Heart left ventricle (tissue), 16 donors: ENCODE measurements at regions of chr18 and their contacts with region 1.

Region 1: DNA sequence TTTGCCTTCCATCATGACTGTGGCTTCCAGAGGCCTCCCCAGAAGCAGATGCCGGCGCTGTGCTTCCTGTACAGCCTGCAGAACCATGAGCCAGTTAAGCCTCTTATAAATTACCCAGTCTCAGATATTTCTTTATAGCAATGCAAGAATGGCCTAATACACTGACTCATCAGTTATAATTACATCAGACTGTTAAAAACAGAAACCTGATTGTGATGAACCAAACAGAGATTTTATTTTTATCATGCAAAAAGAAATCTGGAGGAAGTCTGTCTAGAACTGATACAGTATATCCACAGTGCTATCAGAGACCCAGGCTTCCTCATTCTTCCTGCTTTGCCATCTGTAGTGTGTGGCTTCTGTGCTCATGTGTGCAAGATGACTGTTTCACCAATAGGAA is 93.4 kb upstream of the MEX3C start:
- DNase-seq: no peak
- ATAC-seq: no peak
- H3K4me3 ChIP-seq: no peak overlapping the region
- H3K27ac ChIP-seq: no peak overlapping the region
- H3K4me1 ChIP-seq: peaks cover 0 to 9% (median 0%) of the 10 kb centered on the region in 12 donors
- H3K27me3 ChIP-seq: no peaks in the 10 kb centered on the region
- CTCF ChIP-seq: no peak
- POLR2A ChIP-seq: no peak

Region 2: GRCh38 chr18:51110073-51110803 is 180.6 kb before region 1 on chr18:
- intact Hi-C with region 1: no loop called
- DNase-seq: peak; percentile 52 to 85 (median 64)
- ATAC-seq: peak; percentile 82 to 96 (median 94)
- H3K4me3 ChIP-seq: peak overlapping the region in 2 of 12 donors; percentile 20 to 24
- H3K27ac ChIP-seq: no peak overlapping the region
- H3K4me1 ChIP-seq: peaks cover 0 to 6% (median 0%) of the 10 kb centered on the region in 12 donors
- H3K27me3 ChIP-seq: peaks cover 0 to 4% (median 0%) of the 10 kb centered on the region in 9 donors
- CTCF ChIP-seq: peak; percentile 85 to 99 (median 96)
- POLR2A ChIP-seq: no peak

Region 3: GRCh38 chr18:51248685-51249084 is 42.2 kb before region 1 on chr18:
- intact Hi-C with region 1: loop called in 1 of 10 experiments (anchors 5 kb)
- DNase-seq: no peak
- ATAC-seq: no peak
- H3K4me3 ChIP-seq: no peak overlapping the region
- H3K27ac ChIP-seq: no peak overlapping the region
- H3K4me1 ChIP-seq: no peaks in the 10 kb centered on the region
- H3K27me3 ChIP-seq: peaks cover 0 to 6% (median 0%) of the 10 kb centered on the region in 9 donors
- CTCF ChIP-seq: no peak
- POLR2A ChIP-seq: no peak

Region 4: GRCh38 chr18:51668101-51668500 is 377.2 kb after region 1 on chr18:
- intact Hi-C with region 1: no loop called
- DNase-seq: peak in 4 of 5 donors; percentile 17 to 58 (median 28)
- ATAC-seq: no peak
- H3K4me3 ChIP-seq: no peak overlapping the region
- H3K27ac ChIP-seq: no peak overlapping the region
- H3K4me1 ChIP-seq: no peaks in the 10 kb centered on the region
- H3K27me3 ChIP-seq: peaks cover 0 to 27% (median 2%) of the 10 kb centered on the region in 9 donors
- CTCF ChIP-seq: peak; percentile 54 to 73 (median 64)
- POLR2A ChIP-seq: no peak